Sciatic nerve (tissue), 2 donors: ENCODE measurements at regions of chr22 and their contacts with region 1.

Region 1: DNA sequence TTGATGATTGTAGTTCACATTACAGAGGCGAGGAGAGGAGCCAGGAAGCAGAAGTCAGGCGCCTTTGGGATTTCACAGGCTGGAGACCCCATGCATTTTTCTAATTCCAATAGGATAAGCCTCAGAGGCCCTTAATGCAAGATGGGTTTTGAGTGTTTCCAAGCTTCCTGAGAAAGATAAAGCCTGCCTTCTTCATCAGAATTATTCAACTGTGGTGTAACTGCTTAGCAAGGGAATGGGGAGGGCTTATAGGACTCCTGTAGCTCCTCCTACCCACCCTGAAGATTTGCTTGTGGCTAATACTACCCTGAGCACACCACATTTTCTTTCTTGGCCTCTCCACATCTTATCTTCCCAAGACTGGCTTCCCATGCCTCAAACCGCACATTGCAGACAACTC is 151.1 kb upstream of the ISX start:
- DNase-seq: no peak
- ATAC-seq: peak; percentile 30

Region 2: DNA sequence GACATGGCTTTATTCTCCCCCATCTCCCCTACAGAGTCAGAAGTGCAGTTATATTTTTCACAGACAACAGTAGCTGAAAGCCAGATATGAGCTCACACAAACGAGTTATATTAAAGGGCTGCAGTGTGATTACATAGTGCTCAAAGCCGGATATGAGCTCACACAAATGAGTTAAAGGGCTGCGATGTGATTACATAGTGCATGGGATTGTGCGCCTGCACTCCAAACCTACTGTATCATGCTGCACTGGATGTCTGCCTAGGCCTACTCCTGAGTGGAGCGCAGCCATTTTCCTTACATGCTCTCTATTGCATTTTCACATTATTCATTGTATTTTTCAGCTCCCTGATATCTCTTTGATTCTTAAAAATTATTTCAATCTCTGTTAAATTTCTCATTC is 580.0 kb before region 1 on chr22:
- intact Hi-C with region 1: loop called (anchors 5 kb)
- DNase-seq: no peak
- ATAC-seq: no peak